Activated T-helper 1 cell treated with anti-CD3 and anti-CD28 coated beads, Interleukin-12 subunit alpha, Interleukin-12 subunit beta, Interleukin-2, Interleukin-4 antibody, amounts not matched to agents 30 ng/mL and 10 ng/mL and 1 ng/mL, durations not matched to agents 14 hours and 24 hours and 36 hours (primary cell): ENCODE measurements at regions of chr21 and their contacts with region 1.

Region 1: GRCh38 chr21:34845521-34846451 is 177.0 kb downstream of the CLIC6 start:
- DNase-seq: peak; percentile 45
- H3K4me3 Mint-ChIP-seq: peak overlapping the region; percentile 64
- H3K27ac Mint-ChIP-seq: peak overlapping the region; percentile 77
- H3K4me1 Mint-ChIP-seq: peaks cover 44% of the 10 kb centered on the region
- H3K27me3 Mint-ChIP-seq: no peaks in the 10 kb centered on the region

Region 2: GRCh38 chr21:34737107-34737506 is 108.7 kb before region 1 on chr21:
- intact Hi-C with region 1: no loop called
- DNase-seq: no peak
- H3K4me3 Mint-ChIP-seq: no peak overlapping the region
- H3K27ac Mint-ChIP-seq: no peak overlapping the region
- H3K4me1 Mint-ChIP-seq: no peaks in the 10 kb centered on the region
- H3K27me3 Mint-ChIP-seq: peaks cover 11% of the 10 kb centered on the region

Region 3: GRCh38 chr21:34807146-34807880 is 38.5 kb before region 1 on chr21:
- intact Hi-C with region 1: loop called (anchors 2 kb)
- DNase-seq: peak; percentile 54
- H3K4me3 Mint-ChIP-seq: peak overlapping the region; percentile 56
- H3K27ac Mint-ChIP-seq: peak overlapping the region; percentile 93
- H3K4me1 Mint-ChIP-seq: peaks cover 92% of the 10 kb centered on the region
- H3K27me3 Mint-ChIP-seq: no peaks in the 10 kb centered on the region

Region 4: GRCh38 chr21:35084869-35085268 is 239.1 kb after region 1 on chr21:
- intact Hi-C with region 1: no loop called
- DNase-seq: no peak
- H3K4me3 Mint-ChIP-seq: no peak overlapping the region
- H3K27ac Mint-ChIP-seq: no peak overlapping the region
- H3K4me1 Mint-ChIP-seq: peaks cover 31% of the 10 kb centered on the region
- H3K27me3 Mint-ChIP-seq: peaks cover 2% of the 10 kb centered on the region